Colonic mucosa (tissue), 4 donors: ENCODE measurements at regions of chr3 and their contacts with region 1.

Region 1: DNA sequence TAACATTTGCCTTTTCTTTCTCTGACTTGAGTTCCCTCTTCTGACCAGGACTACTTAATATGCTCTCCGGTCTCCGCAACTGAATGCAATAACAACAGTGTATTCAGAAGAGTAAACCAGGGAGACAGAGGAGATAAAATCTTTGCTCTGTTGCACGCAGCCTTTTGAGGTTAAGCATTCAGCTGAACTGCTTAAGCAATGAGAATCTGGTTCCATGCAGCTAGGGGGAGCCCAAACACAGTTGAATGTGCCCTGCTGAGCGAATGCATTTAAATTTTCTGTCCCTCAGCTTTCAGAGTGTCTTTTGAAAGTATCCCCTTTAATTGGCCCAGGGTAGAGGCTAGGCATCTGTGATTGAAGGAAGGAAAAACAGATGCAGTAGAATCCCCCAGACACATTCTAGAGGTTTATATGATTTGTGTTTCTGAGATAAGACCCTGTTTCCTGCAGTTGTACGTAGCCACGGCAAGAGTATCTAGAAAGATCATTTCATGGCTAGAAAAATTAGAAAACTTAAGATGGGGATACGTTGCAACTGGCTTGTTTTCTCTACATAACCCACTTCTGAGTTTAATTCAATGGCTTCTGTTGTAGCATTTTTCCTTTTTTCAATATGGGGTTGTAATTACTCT is 309.6 kb downstream of the TUSC7 start:
- DNase-seq: peak; percentile 59
- H3K4me3 ChIP-seq: no peak overlapping the region
- H3K27ac ChIP-seq: no peak overlapping the region
- H3K4me1 ChIP-seq: no peaks in the 10 kb centered on the region
- H3K27me3 ChIP-seq: no peaks in the 10 kb centered on the region
- CTCF ChIP-seq: peak; percentile 66

Region 2: DNA sequence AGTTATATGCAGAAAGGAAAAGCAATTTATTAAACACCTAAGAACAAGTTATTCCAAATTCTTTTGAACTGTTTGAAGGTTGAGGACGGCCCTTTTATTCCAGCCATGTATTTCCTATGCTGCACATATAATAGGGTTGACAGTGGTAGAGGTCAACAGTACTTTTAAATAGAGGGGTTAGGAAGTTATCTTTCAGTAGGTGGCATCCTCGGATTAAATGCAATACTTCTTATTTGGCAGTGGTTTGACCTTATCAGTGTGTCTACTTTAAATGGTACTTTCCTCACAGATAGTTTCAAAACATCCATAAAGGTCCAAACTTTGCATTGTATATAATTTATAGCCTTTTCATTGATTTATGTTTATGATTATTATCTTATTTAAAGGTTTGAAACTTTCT is 249.1 kb after region 1 on chr3:
- intact Hi-C with region 1: no loop called
- DNase-seq: no peak
- H3K4me3 ChIP-seq: no peak overlapping the region
- H3K27ac ChIP-seq: no peak overlapping the region
- H3K4me1 ChIP-seq: no peaks in the 10 kb centered on the region
- H3K27me3 ChIP-seq: no peaks in the 10 kb centered on the region
- CTCF ChIP-seq: no peak

Region 3: DNA sequence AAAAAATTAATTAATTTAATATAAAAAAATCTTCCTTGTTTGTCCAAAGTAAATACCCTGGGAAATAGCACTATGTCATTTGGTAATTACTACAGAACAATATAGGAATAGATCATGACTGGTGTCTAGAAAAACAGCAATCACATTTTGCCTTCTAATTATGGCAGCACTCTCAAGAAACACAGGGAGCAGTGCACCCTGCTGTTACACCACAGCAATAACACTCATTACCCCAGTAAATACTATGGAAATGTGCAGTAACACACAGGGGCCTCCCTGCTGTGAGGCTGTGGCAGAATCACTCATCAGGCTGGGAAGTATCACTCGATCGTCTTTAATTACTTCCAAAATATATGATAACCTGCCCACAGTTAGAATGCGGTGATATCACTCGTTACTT is 336.4 kb after region 1 on chr3:
- intact Hi-C with region 1: loop called (anchors 10 kb)
- DNase-seq: peak; percentile 20
- H3K4me3 ChIP-seq: no peak overlapping the region
- H3K27ac ChIP-seq: no peak overlapping the region
- H3K4me1 ChIP-seq: no peaks in the 10 kb centered on the region
- H3K27me3 ChIP-seq: no peaks in the 10 kb centered on the region
- CTCF ChIP-seq: peak; percentile 39

Region 4: GRCh38 chr3:117526470-117527079 is 507.4 kb after region 1 on chr3:
- intact Hi-C with region 1: loop called (anchors 10 kb)
- DNase-seq: peak; percentile 27
- H3K4me3 ChIP-seq: no peak overlapping the region
- H3K27ac ChIP-seq: no peak overlapping the region
- H3K4me1 ChIP-seq: no peaks in the 10 kb centered on the region
- H3K27me3 ChIP-seq: no peaks in the 10 kb centered on the region
- CTCF ChIP-seq: peak; percentile 59

Region 5: DNA sequence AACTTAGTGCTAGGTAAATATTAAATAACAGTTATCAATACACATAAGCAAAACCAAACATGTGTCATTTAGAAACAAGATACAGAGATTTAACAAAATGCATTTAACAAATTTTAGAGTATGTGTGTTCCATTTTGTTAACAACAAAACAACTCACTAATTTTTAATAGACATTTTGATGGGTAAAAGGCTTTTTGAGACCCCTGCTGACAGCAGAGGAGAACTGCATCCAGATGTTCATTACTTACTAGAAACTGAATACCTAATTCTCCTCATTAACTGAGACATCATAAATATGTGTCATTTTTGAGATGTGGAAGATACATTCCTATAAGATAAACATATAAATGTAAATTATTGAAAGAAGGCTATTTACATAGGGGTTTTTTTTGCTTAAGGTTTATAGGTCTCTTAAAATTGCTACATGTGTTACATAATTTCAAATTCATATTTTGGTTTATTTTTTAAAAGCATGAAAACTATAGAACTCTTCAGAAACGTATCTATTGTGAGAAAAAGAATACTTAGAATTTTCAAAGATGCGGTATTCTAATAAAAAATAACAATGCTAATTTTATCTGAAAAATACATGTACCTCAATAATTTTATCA is 700.2 kb after region 1 on chr3:
- intact Hi-C with region 1: loop called (anchors 5 kb)
- DNase-seq: no peak
- H3K4me3 ChIP-seq: no peak overlapping the region
- H3K27ac ChIP-seq: no peak overlapping the region
- H3K4me1 ChIP-seq: no peaks in the 10 kb centered on the region
- H3K27me3 ChIP-seq: no peaks in the 10 kb centered on the region
- CTCF ChIP-seq: peak; percentile 60